Heart left ventricle (tissue), 16 donors: ENCODE measurements at regions of chr1 and their contacts with region 1.

Region 1: DNA sequence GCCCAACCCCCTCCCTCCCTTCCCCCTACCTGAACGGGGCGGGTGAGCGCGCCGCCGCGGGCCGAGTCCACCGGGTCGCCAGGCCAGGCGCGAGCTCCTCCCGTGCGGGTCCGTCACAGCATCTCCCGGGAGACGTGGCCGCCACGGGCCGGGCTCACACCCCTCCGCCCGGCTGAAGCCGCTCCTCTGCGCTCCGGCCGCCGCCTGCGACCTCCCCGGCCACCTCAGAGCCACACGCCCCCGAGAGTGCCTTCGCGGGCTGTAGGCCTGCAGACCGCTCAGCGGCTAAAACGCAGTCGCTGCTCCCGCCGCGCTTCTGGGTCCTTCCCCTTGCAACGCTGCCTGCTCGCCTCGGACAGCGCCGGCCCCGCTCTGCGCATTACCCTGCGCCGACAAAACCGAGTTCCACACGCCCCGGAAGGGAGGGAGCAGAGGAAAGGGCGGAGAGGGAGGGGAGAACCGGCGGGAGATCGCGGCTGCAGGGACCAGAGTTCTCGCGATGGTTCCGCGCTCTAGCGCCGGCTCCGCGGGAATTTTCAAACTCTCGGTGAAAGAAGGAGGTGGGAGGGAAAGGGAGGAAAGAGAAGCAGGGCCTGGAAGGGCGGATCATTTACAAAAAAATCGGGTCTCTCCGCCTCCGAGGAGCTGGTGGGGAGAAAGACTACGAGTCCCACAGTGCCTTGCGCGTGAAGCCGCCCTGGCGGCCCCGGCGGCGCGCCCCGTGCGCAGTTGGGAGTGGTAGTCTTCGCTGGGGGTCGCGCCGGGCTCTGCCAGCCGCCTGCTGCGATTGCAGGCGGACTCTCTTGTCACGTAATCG is at the start of gene AHCTF1:
- DNase-seq: peak; percentile 97 to 98 (median 97)
- ATAC-seq: peak; percentile 98 to 99 (median 99)
- H3K4me3 ChIP-seq: peak within 1 kb of the TSS; percentile 61 to 98 (median 90)
- H3K27ac ChIP-seq: peak within 1 kb of the TSS; percentile 89 to 99 (median 96)
- H3K4me1 ChIP-seq: peaks cover 0 to 29% (median 18%) of the 10 kb centered on the region in 12 donors
- H3K27me3 ChIP-seq: no peaks in the 10 kb centered on the region
- CTCF ChIP-seq: peak in 2 of 12 donors; percentile 6 to 11
- POLR2A ChIP-seq: peak; percentile 79 to 98
- total RNA-seq, gene AHCTF1: 17.9 to 39.7 (median 19.9) TPM

Region 2: GRCh38 chr1:246907472-246907871 is 24.3 kb before region 1 on chr1:
- intact Hi-C with region 1: no loop called
- DNase-seq: peak in 2 of 5 donors; percentile 16 to 34
- ATAC-seq: peak in 3 of 4 donors; percentile 57 to 65 (median 65)
- H3K4me3 ChIP-seq: no peak overlapping the region
- H3K27ac ChIP-seq: no peak overlapping the region
- H3K4me1 ChIP-seq: peaks cover 0 to 16% (median 2%) of the 10 kb centered on the region in 12 donors
- H3K27me3 ChIP-seq: no peaks in the 10 kb centered on the region
- CTCF ChIP-seq: peak in 11 of 12 donors; percentile 30 to 64 (median 50)
- POLR2A ChIP-seq: no peak

Region 3: DNA sequence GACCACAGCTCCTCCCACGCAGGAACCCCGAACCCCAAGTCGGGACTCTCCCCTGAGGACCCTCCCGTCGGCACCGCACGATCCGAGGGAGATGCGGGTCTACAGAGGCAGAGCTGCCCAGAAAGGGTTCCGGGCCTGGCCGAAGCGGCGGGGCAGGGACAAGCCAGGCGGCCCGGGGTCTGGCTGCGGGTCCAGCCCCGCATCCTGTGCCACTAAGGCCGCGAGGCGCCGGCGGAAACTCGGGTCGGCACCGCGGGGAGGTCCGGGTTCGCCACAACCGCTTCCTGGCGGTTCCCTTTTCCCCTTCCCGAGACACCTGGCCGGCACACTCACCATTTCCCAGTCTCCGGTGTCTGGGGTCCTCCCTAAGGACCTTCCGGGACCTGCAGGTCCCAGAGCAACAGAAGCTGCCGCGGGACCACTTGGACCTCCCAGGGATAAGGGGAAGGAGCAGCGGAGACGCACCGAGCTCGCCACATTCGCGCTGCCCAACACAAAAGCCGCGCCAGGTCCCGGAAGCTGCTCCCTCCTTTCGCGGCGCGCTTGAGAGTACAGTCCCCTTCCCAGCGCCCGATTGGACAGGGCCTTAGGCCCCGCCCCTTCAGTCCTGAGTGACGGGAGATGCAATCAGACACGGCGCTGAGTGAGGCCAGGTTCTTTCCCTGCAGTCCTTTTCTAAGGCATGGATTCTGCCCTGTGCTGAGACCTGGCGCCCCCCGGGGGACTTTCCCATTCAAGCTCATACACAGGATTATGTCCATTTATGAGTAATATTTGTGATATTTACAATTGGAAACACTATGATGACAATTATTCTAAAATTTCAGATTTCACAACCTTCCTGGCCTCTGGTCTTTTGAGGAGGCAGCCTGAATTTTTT is 146.7 kb after region 1 on chr1 and contains the start of gene ZNF670:
- intact Hi-C with region 1: loop called in 2 of 10 experiments (anchors 10 kb)
- DNase-seq: peak; percentile 95 to 97 (median 96)
- ATAC-seq: peak; percentile 100
- H3K4me3 ChIP-seq: peak within 1 kb of the TSS; percentile 74 to 98 (median 88)
- H3K27ac ChIP-seq: peak within 1 kb of the TSS; percentile 47 to 84 (median 72)
- H3K4me1 ChIP-seq: peaks cover 0 to 21% (median 11%) of the 10 kb centered on the region in 12 donors
- H3K27me3 ChIP-seq: no peaks in the 10 kb centered on the region
- CTCF ChIP-seq: peak in 2 of 12 donors; percentile 3 to 16
- POLR2A ChIP-seq: peak in 1 of 2 donors; percentile 70
- total RNA-seq, gene ZNF670: 0.60 to 3.6 (median 1.0) TPM

Region 4: GRCh38 chr1:247103859-247104591 is 172.3 kb after region 1 on chr1 and contains the start of gene ZNF669:
- intact Hi-C with region 1: loop called in 1 of 10 experiments (anchors 10 kb)
- DNase-seq: peak; percentile 96 to 98 (median 98)
- ATAC-seq: peak; percentile 100
- H3K4me3 ChIP-seq: peak within 1 kb of the TSS; percentile 63 to 97 (median 86)
- H3K27ac ChIP-seq: peak within 1 kb of the TSS; percentile 48 to 90 (median 79)
- H3K4me1 ChIP-seq: peaks cover 0 to 18% (median 14%) of the 10 kb centered on the region in 12 donors
- H3K27me3 ChIP-seq: no peaks in the 10 kb centered on the region
- CTCF ChIP-seq: no peak
- POLR2A ChIP-seq: peak in 1 of 2 donors; percentile 77
- total RNA-seq, gene ZNF669: 1.5 to 5.4 (median 3.2) TPM